Activated CD8-positive, alpha-beta memory T cell treated with anti-CD3 and anti-CD28 coated beads, Interleukin-2, amount 10 ng/mL, durations not matched to agents 7 days and 5 days (primary cell): ENCODE measurements at regions of chr17 and their contacts with region 1.

Region 1: DNA sequence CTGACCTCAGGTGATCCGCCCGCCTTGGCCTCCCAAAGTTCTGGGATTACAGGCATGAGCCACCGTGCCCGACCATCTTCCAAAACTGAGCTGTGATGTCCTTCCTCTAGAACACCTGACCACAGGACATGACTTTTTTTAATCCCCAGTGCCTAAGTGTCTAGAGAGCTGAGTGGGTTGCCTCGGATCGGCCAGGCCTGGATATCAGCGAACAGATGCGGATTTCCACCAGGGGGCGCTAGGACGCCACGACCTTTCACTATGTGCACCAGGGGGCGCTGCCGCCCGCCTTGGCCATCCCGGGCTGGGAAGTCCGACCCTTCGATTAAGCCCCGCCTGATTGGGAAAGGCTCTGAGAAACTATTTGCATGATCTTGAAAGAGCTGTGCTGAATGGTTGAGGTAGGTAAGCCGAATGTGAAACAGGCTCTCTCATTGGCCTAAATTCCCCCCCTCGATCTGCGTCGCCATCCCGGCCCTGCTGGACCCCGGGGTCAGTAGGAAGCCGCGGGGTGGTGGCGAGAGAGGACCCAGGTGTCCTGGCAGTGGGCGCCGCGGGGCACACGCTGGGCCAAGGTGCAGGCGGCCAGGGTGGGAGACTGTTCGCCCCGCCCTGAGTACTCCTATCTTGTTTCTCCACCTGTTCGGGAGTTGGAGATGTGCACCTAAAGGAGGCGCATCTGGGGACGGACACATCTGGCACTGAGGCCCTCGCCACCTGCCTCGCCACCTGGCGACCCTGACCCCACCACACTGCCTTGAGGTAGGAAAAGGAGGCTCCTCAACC is at the start of gene ACBD4:
- DNase-seq: peak; percentile 98
- ATAC-seq: peak; percentile 91
- H3K4me3 Mint-ChIP-seq: peak within 1 kb of the TSS; percentile 83
- H3K27ac Mint-ChIP-seq: peak within 1 kb of the TSS; percentile 85
- H3K4me1 Mint-ChIP-seq: peaks cover 19% of the 10 kb centered on the region
- H3K27me3 Mint-ChIP-seq: peaks cover 9% of the 10 kb centered on the region
- total RNA-seq, gene ACBD4: 14.9 to 20.6 TPM

Region 2: GRCh38 chr17:44775136-44775837 is 360.1 kb before region 1 on chr17:
- CTCF ChIA-PET with region 1: interaction called, 12 read pairs
- DNase-seq: peak; percentile 99
- ATAC-seq: peak; percentile 97
- H3K4me3 Mint-ChIP-seq: peak overlapping the region; percentile 76
- H3K27ac Mint-ChIP-seq: peak overlapping the region; percentile 62
- H3K4me1 Mint-ChIP-seq: peaks cover 14% of the 10 kb centered on the region
- H3K27me3 Mint-ChIP-seq: peaks cover 7% of the 10 kb centered on the region

Region 3: DNA sequence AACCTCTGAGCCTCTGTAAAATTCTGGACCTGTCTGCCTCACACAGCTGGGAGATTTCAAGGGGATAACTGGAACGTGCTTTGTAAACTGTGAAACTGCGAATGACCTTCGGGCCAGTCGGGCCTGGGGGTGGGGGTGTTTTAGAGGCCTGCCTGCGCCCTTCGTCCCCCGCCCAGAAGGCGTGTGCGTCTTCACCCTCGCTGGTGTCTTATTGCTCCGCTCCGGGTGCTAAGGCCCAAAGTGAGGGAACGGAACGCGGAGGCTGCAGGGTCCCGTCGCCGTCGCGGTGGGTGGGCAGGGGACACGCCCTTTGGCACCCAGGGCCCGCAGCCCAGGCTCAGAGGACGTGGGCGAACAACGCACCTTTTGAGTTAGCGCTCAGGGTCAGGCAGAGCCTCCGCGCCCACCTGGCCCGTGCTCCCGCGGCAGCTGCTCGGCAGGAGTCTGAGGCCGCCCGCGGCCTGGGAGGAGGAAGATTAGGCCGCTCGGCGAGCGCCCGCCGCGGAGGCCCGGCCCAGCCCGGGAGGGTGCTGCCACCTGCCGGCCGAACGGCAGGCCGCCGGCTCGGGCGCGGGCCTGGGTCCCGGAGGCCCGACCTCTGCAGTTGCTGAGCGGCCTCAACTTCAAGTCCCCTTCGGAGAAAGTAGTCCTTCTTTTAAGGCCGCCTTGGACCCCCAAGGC is 113.6 kb before region 1 on chr17:
- CTCF ChIA-PET with region 1: interaction called, 13 read pairs
- DNase-seq: peak; percentile 64
- ATAC-seq: peak; percentile 81
- H3K4me3 Mint-ChIP-seq: no peak overlapping the region
- H3K27ac Mint-ChIP-seq: no peak overlapping the region
- H3K4me1 Mint-ChIP-seq: peaks cover 15% of the 10 kb centered on the region
- H3K27me3 Mint-ChIP-seq: peaks cover 34% of the 10 kb centered on the region

Region 4: GRCh38 chr17:45073414-45074070 is 61.8 kb before region 1 on chr17:
- CTCF ChIA-PET with region 1: interaction called, 10 read pairs
- DNase-seq: no peak
- ATAC-seq: no peak
- H3K4me3 Mint-ChIP-seq: no peak overlapping the region
- H3K27ac Mint-ChIP-seq: no peak overlapping the region
- H3K4me1 Mint-ChIP-seq: peaks cover 20% of the 10 kb centered on the region
- H3K27me3 Mint-ChIP-seq: no peaks in the 10 kb centered on the region

Region 5: DNA sequence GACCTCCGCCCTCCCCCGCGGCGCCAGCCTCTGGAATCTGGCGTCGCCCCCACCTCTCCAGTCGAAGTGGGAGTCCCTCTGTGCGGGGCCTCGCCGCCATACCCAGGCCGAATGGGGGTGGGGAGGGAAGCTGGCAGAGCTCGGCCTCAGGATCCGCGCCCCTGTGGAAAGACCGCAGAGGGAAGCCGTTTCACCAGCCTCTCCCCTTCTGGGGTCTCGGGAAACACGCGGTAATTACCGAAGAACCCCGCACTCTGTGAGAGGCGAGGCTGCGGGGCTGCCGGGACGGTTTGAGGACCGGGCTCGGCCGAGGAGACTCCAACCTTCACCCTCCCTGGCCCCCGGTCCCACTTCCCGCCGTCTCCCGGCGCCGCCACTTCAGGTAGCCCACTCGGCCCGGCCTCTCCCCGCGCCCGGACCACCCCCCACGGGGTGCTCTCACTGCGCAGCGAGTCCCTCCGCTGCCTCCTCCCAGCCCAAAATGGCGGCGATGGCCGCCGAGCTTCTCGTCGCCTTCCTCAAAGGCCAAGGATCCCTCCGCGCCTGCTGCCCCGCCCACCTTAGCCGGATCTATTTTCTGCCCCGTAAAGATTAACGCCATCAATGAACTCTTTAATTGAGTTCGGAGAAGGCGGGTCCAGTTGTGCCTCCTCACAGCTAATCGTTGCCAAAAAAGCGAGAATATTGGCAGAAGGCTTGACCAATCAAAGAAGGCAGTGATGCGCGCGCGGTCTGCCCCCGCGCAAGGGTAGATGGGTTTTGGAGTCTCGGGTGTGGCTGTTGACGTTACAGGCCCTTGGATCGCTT is 25.8 kb after region 1 on chr17:
- CTCF ChIA-PET with region 1: interaction called, 583 read pairs
- DNase-seq: peak; percentile 99
- ATAC-seq: peak; percentile 96
- H3K4me3 Mint-ChIP-seq: peak overlapping the region; percentile 98
- H3K27ac Mint-ChIP-seq: peak overlapping the region; percentile 99
- H3K4me1 Mint-ChIP-seq: peaks cover 41% of the 10 kb centered on the region
- H3K27me3 Mint-ChIP-seq: no peaks in the 10 kb centered on the region

Region 6: DNA sequence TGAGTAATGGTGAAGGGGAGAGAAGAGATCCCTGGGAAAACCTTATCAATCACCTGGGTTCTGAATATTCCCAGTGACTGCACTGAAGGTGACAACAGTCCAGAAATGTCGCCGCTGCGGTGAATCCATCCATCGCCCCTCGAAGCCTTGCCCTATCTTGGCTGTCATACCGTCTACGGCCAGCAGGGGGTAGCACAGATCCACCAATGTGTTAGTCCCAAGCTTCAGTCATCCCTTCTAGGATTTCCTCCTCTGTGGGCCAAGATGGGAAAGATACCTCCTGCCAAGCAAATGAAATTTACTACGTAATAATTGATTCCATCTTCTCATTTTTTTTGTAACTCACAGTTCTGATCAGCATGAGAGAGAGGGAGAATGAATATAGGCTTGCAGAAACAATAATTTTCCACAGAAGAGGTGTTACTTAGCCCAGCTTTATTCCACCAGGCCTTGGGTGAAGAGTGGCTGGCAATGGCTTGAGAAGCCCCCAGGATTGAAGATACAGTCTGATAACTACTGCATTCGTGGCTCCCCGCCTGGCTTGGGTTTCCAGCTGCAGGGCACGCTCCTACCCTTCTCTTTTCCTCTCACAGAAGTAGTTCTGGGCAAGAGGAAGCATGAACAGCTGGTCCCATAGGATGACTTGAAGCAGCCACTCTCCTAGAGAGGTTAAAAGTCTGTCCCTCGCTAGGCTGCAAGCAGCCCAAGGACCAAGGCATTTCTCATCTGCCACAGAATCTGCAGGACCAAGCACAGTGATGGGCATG is 83.7 kb after region 1 on chr17:
- CTCF ChIA-PET with region 1: interaction called, 31 read pairs
- DNase-seq: peak; percentile 89
- ATAC-seq: no peak
- H3K4me3 Mint-ChIP-seq: peak overlapping the region; percentile 88
- H3K27ac Mint-ChIP-seq: peak overlapping the region; percentile 62
- H3K4me1 Mint-ChIP-seq: peaks cover 34% of the 10 kb centered on the region
- H3K27me3 Mint-ChIP-seq: no peaks in the 10 kb centered on the region

Region 7: GRCh38 chr17:45247429-45248131 is 112.2 kb after region 1 on chr17:
- CTCF ChIA-PET with region 1: interaction called, 16 read pairs
- DNase-seq: peak; percentile 100
- ATAC-seq: peak; percentile 91
- H3K4me3 Mint-ChIP-seq: peak overlapping the region; percentile 82
- H3K27ac Mint-ChIP-seq: peak overlapping the region; percentile 96
- H3K4me1 Mint-ChIP-seq: peaks cover 60% of the 10 kb centered on the region
- H3K27me3 Mint-ChIP-seq: no peaks in the 10 kb centered on the region